HCT116 (cell line): ENCODE measurements at regions of chr7 and their contacts with region 1.

Region 1: GRCh38 chr7:141014524-141015395 is at the start of gene MRPS33:
- DNase-seq: peak; percentile 91
- ATAC-seq: peak; percentile 99
- H3K4me3 ChIP-seq: peak within 1 kb of the TSS; percentile 66 to 80
- H3K27ac ChIP-seq: peak within 1 kb of the TSS; percentile 59
- H3K4me1 ChIP-seq: peaks cover 5 to 20% of the 10 kb centered on the region in 2 experiments; a peak in 3 of 4 replicates
- H3K27me3 ChIP-seq: no peaks in the 10 kb centered on the region
- CTCF ChIP-seq: peak; percentile 54 to 92 (median 69)
- POLR2A ChIP-seq: peak; percentile 76
- RAD21 ChIP-seq: no peak
- total RNA-seq, gene MRPS33: 77.3 TPM

Region 2: GRCh38 chr7:140479062-140479738 is 535.6 kb before region 1 on chr7 and contains the start of gene MKRN1:
- CTCF ChIA-PET with region 1: no interaction called
- POLR2A ChIA-PET with region 1: no interaction called
- RAD21 ChIA-PET with region 1: no interaction called
- intact Hi-C with region 1: loop called (anchors 5 kb)
- DNase-seq: peak; percentile 92
- ATAC-seq: peak; percentile 96
- H3K4me3 ChIP-seq: peak within 1 kb of the TSS; percentile 91 to 97
- H3K27ac ChIP-seq: peak within 1 kb of the TSS; percentile 84
- H3K4me1 ChIP-seq: peaks cover 8 to 15% of the 10 kb centered on the region in 2 experiments; a peak in 2 of 4 replicates
- H3K27me3 ChIP-seq: no peaks in the 10 kb centered on the region
- CTCF ChIP-seq: no peak
- POLR2A ChIP-seq: no peak
- RAD21 ChIP-seq: no peak
- total RNA-seq, gene MKRN1: 95.0 TPM

Region 3: GRCh38 chr7:140673063-140673773 is 341.5 kb before region 1 on chr7:
- CTCF ChIA-PET with region 1: interaction called, 4 read pairs
- POLR2A ChIA-PET with region 1: no interaction called
- RAD21 ChIA-PET with region 1: no interaction called
- intact Hi-C with region 1: loop called (anchors 1 kb)
- DNase-seq: no peak
- ATAC-seq: peak; percentile 78
- H3K4me3 ChIP-seq: peak overlapping the region; percentile 52 to 66
- H3K27ac ChIP-seq: peak overlapping the region; percentile 87
- H3K4me1 ChIP-seq: peaks cover 9 to 27% of the 10 kb centered on the region in 2 experiments
- H3K27me3 ChIP-seq: no peaks in the 10 kb centered on the region
- CTCF ChIP-seq: no peak
- POLR2A ChIP-seq: peak; percentile 25
- RAD21 ChIP-seq: no peak

Region 4: DNA sequence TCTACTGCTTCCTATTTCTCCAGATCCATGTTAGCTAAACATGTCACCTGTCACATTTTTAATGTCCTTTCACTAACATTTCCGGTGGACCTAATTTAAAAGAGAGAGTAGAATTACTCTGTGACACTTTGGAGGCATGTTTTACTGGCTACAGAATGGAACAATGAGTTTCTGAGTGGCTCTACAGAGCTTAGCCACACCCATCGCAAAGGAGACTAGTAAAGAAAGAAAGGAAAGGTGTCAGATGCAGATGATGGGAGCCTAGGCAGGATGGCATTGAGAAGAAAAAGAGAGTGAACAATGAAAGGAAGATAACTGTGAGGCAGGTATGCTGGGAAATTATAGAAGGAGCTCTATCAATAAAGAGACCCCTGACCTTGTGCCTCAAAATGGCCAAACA is 282.3 kb before region 1 on chr7:
- CTCF ChIA-PET with region 1: no interaction called
- POLR2A ChIA-PET with region 1: no interaction called
- RAD21 ChIA-PET with region 1: no interaction called
- intact Hi-C with region 1: no loop called
- DNase-seq: no peak
- ATAC-seq: no peak
- H3K4me3 ChIP-seq: no peak overlapping the region
- H3K27ac ChIP-seq: no peak overlapping the region
- H3K4me1 ChIP-seq: no peaks in the 10 kb centered on the region
- H3K27me3 ChIP-seq: no peaks in the 10 kb centered on the region
- CTCF ChIP-seq: no peak
- POLR2A ChIP-seq: no peak
- RAD21 ChIP-seq: no peak

Region 5: GRCh38 chr7:140810830-140811556 is 203.8 kb before region 1 on chr7:
- CTCF ChIA-PET with region 1: interaction called, 12 read pairs
- POLR2A ChIA-PET with region 1: no interaction called
- RAD21 ChIA-PET with region 1: interaction called in 1 of 2 experiments, 3 read pairs
- intact Hi-C with region 1: loop called (anchors 1 kb)
- DNase-seq: peak; percentile 53
- ATAC-seq: peak; percentile 97
- H3K4me3 ChIP-seq: no peak overlapping the region
- H3K27ac ChIP-seq: no peak overlapping the region
- H3K4me1 ChIP-seq: no peaks in the 10 kb centered on the region
- H3K27me3 ChIP-seq: no peaks in the 10 kb centered on the region
- CTCF ChIP-seq: peak; percentile 54 to 86 (median 65); a peak in 5 of 6 replicates
- POLR2A ChIP-seq: no peak
- RAD21 ChIP-seq: peak; percentile 79

Region 6: GRCh38 chr7:141220263-141220880 is 205.6 kb after region 1 on chr7:
- CTCF ChIA-PET with region 1: no interaction called
- POLR2A ChIA-PET with region 1: no interaction called
- RAD21 ChIA-PET with region 1: no interaction called
- intact Hi-C with region 1: loop called (anchors 5 kb)
- DNase-seq: peak; percentile 7
- ATAC-seq: peak; percentile 92
- H3K4me3 ChIP-seq: no peak overlapping the region
- H3K27ac ChIP-seq: no peak overlapping the region
- H3K4me1 ChIP-seq: no peaks in the 10 kb centered on the region
- H3K27me3 ChIP-seq: peaks cover 6% of the 10 kb centered on the region; the same call in 1 of the 2 replicates
- CTCF ChIP-seq: peak; percentile 47 to 55 (median 54); a peak in 5 of 6 replicates
- POLR2A ChIP-seq: no peak
- RAD21 ChIP-seq: peak; percentile 80

Region 7: DNA sequence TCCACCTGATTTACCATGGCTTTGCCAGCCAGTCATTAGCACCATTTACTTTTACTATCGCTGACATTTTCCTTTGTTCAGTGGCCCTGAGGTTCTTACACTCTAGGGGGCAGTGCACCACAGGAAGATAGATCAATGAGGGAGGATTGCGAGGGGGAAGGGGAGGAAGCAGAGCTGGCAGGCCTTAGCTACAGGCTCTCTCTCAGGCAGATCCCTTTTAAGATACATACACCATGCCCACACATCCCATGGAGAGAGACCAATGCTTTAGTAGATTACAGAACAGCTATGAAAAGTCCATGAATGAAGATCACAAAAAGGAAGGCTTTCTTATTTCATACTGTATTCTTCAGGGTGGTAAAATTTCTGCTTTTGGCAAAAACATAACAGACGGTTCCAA is 639.8 kb after region 1 on chr7:
- CTCF ChIA-PET with region 1: no interaction called
- POLR2A ChIA-PET with region 1: no interaction called
- RAD21 ChIA-PET with region 1: no interaction called
- intact Hi-C with region 1: loop called (anchors 1 kb)
- DNase-seq: peak; percentile 41
- ATAC-seq: peak; percentile 89
- H3K4me3 ChIP-seq: no peak overlapping the region
- H3K27ac ChIP-seq: no peak overlapping the region
- H3K4me1 ChIP-seq: no peaks in the 10 kb centered on the region
- H3K27me3 ChIP-seq: no peaks in the 10 kb centered on the region
- CTCF ChIP-seq: peak; percentile 76 to 78 (median 78); a peak in 5 of 6 replicates
- POLR2A ChIP-seq: no peak
- RAD21 ChIP-seq: peak; percentile 71